ENCODE measurements at regions of chr15 and their contacts with region 1.

Region 1: GRCh38 chr15:85380217-85380811 is at the start of gene AKAP13:
- DNase-seq: peak; percentile 97
- H3K4me3 Mint-ChIP-seq: peak within 1 kb of the TSS; percentile 76
- H3K27ac Mint-ChIP-seq: peak within 1 kb of the TSS; percentile 97
- H3K4me1 Mint-ChIP-seq: peaks cover 67% of the 10 kb centered on the region
- H3K27me3 Mint-ChIP-seq: no peaks in the 10 kb centered on the region

Region 2: DNA sequence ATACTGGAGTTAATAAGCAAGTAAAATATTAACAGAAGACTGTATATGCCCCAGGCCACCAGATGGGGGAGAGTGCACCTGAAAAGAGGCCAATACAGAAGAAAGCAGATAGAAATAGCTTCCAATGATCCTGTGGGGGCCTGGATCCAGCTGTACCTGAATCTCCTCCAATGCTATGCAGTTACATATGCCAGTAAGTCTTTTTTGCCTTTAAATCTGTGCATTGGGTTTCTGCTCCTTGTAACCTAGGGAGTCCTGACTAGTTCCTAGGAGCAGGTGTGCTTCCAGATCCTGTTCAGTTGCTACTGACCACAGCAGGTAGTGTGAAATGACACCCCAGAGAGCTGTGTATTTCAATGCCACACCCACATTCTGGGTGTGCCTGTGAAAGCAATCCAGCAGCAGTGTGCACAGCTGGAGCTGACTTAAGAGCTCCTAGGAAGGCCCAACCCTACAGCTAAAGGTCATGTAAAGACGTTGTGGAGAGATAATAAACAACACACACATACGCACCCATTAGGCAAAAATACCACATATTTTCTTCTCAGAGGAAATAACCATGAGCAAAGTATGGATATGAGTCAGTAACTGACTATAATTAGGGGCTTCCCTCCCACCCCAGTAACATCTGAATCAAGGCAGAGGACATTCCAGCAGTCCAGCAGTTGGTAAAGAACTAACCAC is 62.1 kb before region 1 on chr15:
- CTCF ChIA-PET with region 1: interaction called, 10 read pairs
- DNase-seq: peak; percentile 28
- H3K4me3 Mint-ChIP-seq: no peak overlapping the region
- H3K27ac Mint-ChIP-seq: peak overlapping the region; percentile 67
- H3K4me1 Mint-ChIP-seq: peaks cover 48% of the 10 kb centered on the region
- H3K27me3 Mint-ChIP-seq: peaks cover under 1% of the 10 kb centered on the region

Region 3: GRCh38 chr15:85615930-85616329 is 235.6 kb after region 1 on chr15:
- CTCF ChIA-PET with region 1: no interaction called
- DNase-seq: no peak
- H3K4me3 Mint-ChIP-seq: no peak overlapping the region
- H3K27ac Mint-ChIP-seq: no peak overlapping the region
- H3K4me1 Mint-ChIP-seq: peaks cover 9% of the 10 kb centered on the region
- H3K27me3 Mint-ChIP-seq: no peaks in the 10 kb centered on the region